Endothelial cell of umbilical vein (primary cell): ENCODE measurements at regions of chr11 and their contacts with region 1.

Region 1: DNA sequence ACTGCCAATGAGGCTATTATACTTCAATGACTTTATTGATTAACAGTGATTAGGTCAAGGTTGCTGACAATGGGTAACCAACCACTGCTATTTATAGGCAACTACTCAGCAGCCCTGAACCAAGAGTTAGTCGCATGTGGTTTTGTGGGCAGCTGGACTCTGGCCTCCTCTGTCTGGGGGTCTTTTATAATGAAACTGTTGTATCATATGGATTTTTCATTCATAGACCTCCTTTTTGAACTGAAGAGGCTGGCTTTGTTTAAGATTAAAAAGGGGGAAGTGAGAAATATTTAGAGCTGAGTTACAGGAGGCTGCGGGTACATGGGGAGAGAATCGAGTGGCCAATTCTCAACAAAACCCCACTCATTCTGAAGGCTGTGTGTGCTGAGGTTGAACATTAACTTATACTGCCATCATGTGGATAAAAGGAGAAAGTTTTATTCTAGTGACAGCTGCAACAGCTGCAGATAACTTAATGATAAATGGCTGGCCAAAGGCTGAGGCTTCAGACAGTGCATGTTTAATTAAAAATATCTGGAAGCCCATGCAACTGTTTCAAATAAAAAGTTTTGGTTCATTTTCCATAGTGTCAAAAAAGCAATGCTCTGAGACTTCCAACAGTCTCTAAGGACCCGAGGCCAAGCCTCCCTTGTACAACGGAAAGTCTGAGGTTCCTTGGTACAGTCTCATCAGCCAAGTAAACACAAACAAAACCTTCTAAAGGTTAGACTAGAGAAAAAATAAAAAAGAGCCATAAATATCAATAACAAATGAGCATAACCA is 682.6 kb downstream of the KCNA4 start:
- DNase-seq: peak; percentile 61
- H3K4me3 ChIP-seq: no peak overlapping the region
- H3K27ac ChIP-seq: peak overlapping the region; percentile 5
- H3K4me1 ChIP-seq: no peaks in the 10 kb centered on the region
- H3K27me3 ChIP-seq: no peaks in the 10 kb centered on the region
- CTCF ChIP-seq: peak; percentile 24 to 34
- POLR2A ChIP-seq: no peak

Region 2: GRCh38 chr11:27497284-27497866 is 1836.8 kb before region 1 on chr11:
- CTCF ChIA-PET with region 1: interaction called, 14 read pairs
- POLR2A ChIA-PET with region 1: no interaction called
- dilution Hi-C with region 1: no loop called
- intact Hi-C with region 1: loop called (anchors 1 kb)
- DNase-seq: peak; percentile 43
- H3K4me3 ChIP-seq: no peak overlapping the region
- H3K27ac ChIP-seq: no peak overlapping the region
- H3K4me1 ChIP-seq: no peaks in the 10 kb centered on the region
- H3K27me3 ChIP-seq: no peaks in the 10 kb centered on the region
- CTCF ChIP-seq: peak; percentile 20 to 30
- POLR2A ChIP-seq: no peak

Region 3: DNA sequence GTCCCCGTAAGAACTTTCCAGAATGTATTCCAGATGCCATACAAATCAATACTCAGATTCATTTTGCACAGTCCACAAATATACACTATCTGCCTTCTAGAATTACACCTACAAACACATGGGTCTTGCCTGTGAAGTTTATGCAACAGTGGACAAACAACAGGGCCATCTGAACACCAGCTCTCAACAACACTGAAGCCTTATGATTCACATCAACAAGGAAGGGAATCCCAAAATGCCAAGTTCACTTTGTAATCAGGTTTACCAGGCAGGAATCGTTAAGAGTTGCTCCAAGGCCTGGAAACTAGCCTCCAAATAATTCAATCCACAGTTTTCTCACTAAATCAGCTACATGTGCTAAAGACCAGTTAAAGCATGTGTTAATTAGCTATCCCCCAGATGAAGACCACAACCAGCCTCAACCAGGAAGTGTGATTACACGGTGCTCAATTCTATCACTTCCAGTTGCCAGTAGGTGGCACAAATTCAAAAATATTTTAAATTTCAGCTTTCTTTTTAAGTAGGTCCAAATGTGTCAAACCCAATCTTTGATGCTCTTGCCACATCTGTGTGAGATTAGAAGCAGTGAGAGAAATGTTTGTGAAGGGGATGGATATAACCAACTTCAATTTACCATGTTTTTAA is 1494.8 kb before region 1 on chr11:
- CTCF ChIA-PET with region 1: interaction called, 7 read pairs
- POLR2A ChIA-PET with region 1: no interaction called
- dilution Hi-C with region 1: no loop called
- intact Hi-C with region 1: loop called (anchors 10 kb)
- DNase-seq: peak; percentile 29
- H3K4me3 ChIP-seq: no peak overlapping the region
- H3K27ac ChIP-seq: no peak overlapping the region
- H3K4me1 ChIP-seq: no peaks in the 10 kb centered on the region
- H3K27me3 ChIP-seq: peaks cover 5 to 16% of the 10 kb centered on the region in 2 experiments
- CTCF ChIP-seq: peak; percentile 13 to 26
- POLR2A ChIP-seq: no peak

Region 4: GRCh38 chr11:28566339-28567089 is 767.7 kb before region 1 on chr11:
- CTCF ChIA-PET with region 1: no interaction called
- POLR2A ChIA-PET with region 1: no interaction called
- dilution Hi-C with region 1: no loop called
- intact Hi-C with region 1: no loop called
- DNase-seq: peak; percentile 92
- H3K4me3 ChIP-seq: peak overlapping the region in 2 of 3 experiments; percentile 28 to 71
- H3K27ac ChIP-seq: peak overlapping the region; percentile 77
- H3K4me1 ChIP-seq: peaks cover 12% of the 10 kb centered on the region
- H3K27me3 ChIP-seq: no peaks in the 10 kb centered on the region
- CTCF ChIP-seq: no peak
- POLR2A ChIP-seq: no peak

Region 5: GRCh38 chr11:28697920-28698827 is 636.0 kb before region 1 on chr11:
- CTCF ChIA-PET with region 1: interaction called, 6 read pairs
- POLR2A ChIA-PET with region 1: no interaction called
- dilution Hi-C with region 1: no loop called
- intact Hi-C with region 1: loop called (anchors 5 kb)
- DNase-seq: peak; percentile 60
- H3K4me3 ChIP-seq: no peak overlapping the region
- H3K27ac ChIP-seq: no peak overlapping the region
- H3K4me1 ChIP-seq: peaks cover 21% of the 10 kb centered on the region
- H3K27me3 ChIP-seq: no peaks in the 10 kb centered on the region
- CTCF ChIP-seq: peak; percentile 73 to 80
- POLR2A ChIP-seq: no peak

Region 6: DNA sequence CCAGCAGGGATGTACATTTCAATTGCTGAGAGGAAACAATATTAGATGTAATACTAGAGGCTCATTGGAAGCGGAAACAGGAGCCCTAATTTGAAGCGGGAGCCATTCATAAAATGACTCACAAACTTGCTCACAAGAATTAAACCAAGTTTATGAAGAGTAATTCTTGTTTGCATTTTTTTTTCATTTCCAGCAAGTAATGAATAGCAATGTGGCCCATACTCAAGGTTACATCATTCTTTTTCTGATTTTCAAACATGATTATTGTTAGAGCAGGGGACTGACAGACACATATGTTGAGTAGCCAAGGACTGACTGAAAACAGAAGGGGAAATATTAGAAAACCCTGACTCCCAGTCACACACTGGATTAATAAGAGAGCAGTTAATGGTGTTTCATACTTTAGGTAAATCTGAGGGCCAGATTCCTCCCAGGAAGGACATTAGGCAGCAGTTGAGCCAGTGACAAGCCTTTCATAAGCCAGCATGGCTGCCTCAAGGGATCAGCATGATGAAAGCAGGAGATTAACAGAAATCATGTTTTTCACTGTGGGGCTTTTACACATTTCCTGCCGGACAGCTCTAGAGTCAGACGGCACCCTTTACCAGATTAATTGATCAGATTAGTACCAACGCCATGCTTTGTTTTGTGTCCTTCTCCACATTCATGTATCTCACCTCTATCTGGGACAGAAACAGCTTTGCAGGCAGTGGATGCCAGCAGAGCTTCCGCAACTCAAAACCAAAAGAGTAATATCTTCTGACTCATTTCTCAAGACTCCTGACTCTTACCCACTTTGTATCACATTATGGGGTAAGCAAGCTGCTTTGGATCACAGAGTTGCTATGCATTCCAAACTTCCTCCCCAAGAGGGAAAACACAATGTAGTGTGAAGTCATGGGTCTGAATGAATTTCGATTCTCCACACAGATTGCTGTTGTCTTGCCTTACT is 149.0 kb before region 1 on chr11:
- CTCF ChIA-PET with region 1: no interaction called
- POLR2A ChIA-PET with region 1: no interaction called
- dilution Hi-C with region 1: no loop called
- intact Hi-C with region 1: no loop called
- DNase-seq: no peak
- H3K4me3 ChIP-seq: no peak overlapping the region
- H3K27ac ChIP-seq: no peak overlapping the region
- H3K4me1 ChIP-seq: no peaks in the 10 kb centered on the region
- H3K27me3 ChIP-seq: no peaks in the 10 kb centered on the region
- CTCF ChIP-seq: no peak
- POLR2A ChIP-seq: no peak

Region 7: GRCh38 chr11:29373725-29374124 is 39.5 kb after region 1 on chr11:
- CTCF ChIA-PET with region 1: no interaction called
- POLR2A ChIA-PET with region 1: no interaction called
- dilution Hi-C with region 1: no loop called
- intact Hi-C with region 1: no loop called
- DNase-seq: no peak
- H3K4me3 ChIP-seq: no peak overlapping the region
- H3K27ac ChIP-seq: no peak overlapping the region
- H3K4me1 ChIP-seq: no peaks in the 10 kb centered on the region
- H3K27me3 ChIP-seq: no peaks in the 10 kb centered on the region
- CTCF ChIP-seq: no peak
- POLR2A ChIP-seq: no peak